CD8-positive, alpha-beta memory T cell (primary cell): ENCODE measurements at regions of chr2 and their contacts with region 1.

Region 1: GRCh38 chr2:20411361-20411894 is 35.4 kb upstream of the RHOB start:
- DNase-seq: peak; percentile 46 to 76 (median 55)
- H3K4me3 ChIP-seq: no peak overlapping the region
- H3K4me3 Mint-ChIP-seq: no peak overlapping the region
- H3K27ac ChIP-seq: no peak overlapping the region
- H3K27ac Mint-ChIP-seq: no peak overlapping the region
- H3K4me1 ChIP-seq: no peaks in the 10 kb centered on the region
- H3K4me1 Mint-ChIP-seq: peaks cover 0 to 2% (median 0%) of the 10 kb centered on the region in 3 donors
- H3K27me3 ChIP-seq: no peaks in the 10 kb centered on the region
- H3K27me3 Mint-ChIP-seq: peaks cover 11 to 12% of the 10 kb centered on the region in 2 donors

Region 2: DNA sequence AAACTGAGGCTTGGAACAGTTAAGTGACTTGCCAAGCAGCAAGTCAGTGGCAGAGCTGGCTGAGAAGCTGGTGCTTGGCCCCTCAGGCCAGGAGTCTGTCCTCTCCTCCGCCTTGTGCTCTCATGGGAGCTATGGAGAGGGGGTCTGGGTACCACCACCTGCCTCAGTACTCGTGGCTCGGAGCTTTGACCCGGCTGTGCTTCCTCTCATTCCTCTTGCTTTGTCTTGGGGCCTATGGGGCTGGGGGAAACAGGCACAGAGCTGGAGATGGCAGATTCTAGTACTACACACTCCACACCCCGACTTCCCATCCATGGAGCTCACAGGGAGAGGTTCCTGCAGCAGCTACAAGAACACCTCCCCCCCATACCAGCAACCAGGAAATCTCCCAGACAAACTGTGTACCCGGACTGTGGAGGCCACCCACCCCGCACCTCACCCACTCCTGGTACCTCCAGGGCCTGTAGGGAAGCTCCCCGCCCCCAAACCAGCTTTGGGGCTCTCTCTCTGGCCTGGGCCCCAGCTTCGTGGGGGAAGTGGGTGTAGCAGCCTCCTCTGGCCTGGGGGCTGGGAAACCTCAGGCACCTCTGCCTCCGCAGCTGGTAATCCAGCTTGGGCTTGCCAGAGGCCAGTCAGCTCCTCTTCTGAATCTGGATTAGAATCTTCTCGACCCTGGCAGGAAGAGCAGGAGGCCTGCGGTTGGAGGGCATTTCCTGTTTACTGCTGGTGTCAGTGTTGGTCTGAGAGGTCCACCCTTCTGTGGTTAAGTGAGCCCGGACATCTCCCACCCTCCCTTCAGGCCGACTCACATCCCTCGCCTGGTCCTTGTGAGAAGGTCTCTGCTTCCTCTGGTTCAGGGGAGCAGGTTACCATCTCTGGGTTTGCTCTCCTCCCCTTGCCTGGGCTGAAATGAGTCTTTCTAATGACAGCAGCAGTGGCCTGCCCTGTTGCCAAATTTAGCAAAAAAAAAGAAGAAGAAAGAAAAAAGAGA is 13.2 kb after region 1 on chr2:
- CTCF ChIA-PET with region 1: interaction called, 55 read pairs
- POLR2A ChIA-PET with region 1: no interaction called
- DNase-seq: peak in 1 of 5 donors; percentile 3
- H3K4me3 ChIP-seq: no peak overlapping the region
- H3K4me3 Mint-ChIP-seq: peak overlapping the region in 6 of 7 donors; percentile 11 to 66 (median 45)
- H3K27ac ChIP-seq: peak overlapping the region; percentile 38
- H3K27ac Mint-ChIP-seq: peak overlapping the region in 7 of 8 donors; percentile 21 to 87 (median 82)
- H3K4me1 ChIP-seq: peaks cover 18% of the 10 kb centered on the region
- H3K4me1 Mint-ChIP-seq: peaks cover 18 to 32% (median 24%) of the 10 kb centered on the region in 3 donors
- H3K27me3 ChIP-seq: no peaks in the 10 kb centered on the region
- H3K27me3 Mint-ChIP-seq: peaks cover 1 to 8% of the 10 kb centered on the region in 2 donors